ENCODE measurements at regions of chr14 and their contacts with region 1.

Region 1: DNA sequence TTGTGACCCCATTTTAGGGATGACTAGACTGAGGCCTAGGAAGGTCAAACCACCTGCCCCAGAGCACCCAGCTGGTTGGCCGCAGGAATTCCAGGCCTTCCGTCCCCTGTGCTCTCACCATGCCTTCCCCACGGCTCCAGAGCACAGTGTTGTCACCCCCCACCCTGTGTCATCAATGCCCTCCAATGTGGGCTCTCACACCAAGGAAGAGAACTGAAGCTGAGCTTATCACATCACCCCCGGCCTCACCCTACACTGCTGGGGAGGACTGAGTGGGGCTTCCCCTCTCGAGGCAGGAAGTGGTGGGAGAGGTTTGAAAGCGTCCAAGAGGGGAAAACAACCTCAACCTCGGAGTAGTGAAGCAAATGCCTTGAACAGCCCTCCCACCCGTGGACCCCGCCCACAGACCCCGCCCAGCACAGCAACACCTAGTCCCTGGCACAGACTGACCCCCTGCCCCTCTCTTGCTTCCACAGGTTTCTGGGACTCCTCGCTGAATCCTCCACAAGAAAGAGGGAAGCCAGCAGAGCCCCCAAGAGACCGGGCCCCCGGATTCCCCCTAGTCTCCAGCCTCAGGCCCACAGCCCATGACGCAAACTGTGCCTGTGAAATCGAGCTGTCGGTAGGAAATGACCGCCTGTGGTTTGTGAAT is 97.2 kb downstream of the LGMN start:
- DNase-seq: peak; percentile 62 to 93 (median 78)
- ATAC-seq: peak; percentile 85
- H3K4me3 ChIP-seq: peak overlapping the region; percentile 66
- H3K4me3 Mint-ChIP-seq: peak overlapping the region; percentile 99
- H3K27ac ChIP-seq: peak overlapping the region; percentile 90 to 92
- H3K27ac Mint-ChIP-seq: peak overlapping the region; percentile 97
- H3K4me1 ChIP-seq: peaks cover 94% of the 10 kb centered on the region
- H3K4me1 Mint-ChIP-seq: peaks cover 76% of the 10 kb centered on the region
- H3K27me3 ChIP-seq: no peaks in the 10 kb centered on the region
- H3K27me3 Mint-ChIP-seq: no peaks in the 10 kb centered on the region
- CTCF ChIP-seq: no peak

Region 2: DNA sequence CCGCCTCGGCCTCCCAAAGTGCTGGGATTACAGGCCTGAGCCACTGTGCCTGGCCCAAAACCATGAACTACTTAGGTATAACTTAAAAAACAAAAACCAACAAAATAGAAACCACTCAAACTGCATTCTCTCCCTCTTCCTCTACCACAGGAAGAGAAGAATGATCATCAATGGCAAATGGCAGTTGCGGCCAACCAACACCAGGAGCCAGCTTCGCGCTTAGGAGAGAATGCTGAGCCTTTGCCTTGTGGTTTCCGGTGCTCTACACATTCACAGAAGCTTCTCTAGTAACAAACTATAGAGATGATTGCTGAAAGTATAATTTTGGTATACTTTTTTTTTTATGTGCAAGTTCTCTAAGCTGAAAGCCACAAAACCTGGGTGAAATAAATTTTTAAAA is 936.4 kb before region 1 on chr14:
- CTCF ChIA-PET with region 1: no interaction called
- POLR2A ChIA-PET with region 1: no interaction called
- intact Hi-C with region 1: no loop called
- DNase-seq: peak in 9 of 14 experiments; percentile 16 to 63 (median 41)
- ATAC-seq: peak; percentile 96
- H3K4me3 ChIP-seq: no peak overlapping the region
- H3K4me3 Mint-ChIP-seq: peak overlapping the region; percentile 9
- H3K27ac ChIP-seq: no peak overlapping the region
- H3K27ac Mint-ChIP-seq: peak overlapping the region; percentile 67
- H3K4me1 ChIP-seq: no peaks in the 10 kb centered on the region
- H3K4me1 Mint-ChIP-seq: peaks cover 11% of the 10 kb centered on the region
- H3K27me3 ChIP-seq: no peaks in the 10 kb centered on the region
- H3K27me3 Mint-ChIP-seq: no peaks in the 10 kb centered on the region
- CTCF ChIP-seq: peak; percentile 43

Region 3: DNA sequence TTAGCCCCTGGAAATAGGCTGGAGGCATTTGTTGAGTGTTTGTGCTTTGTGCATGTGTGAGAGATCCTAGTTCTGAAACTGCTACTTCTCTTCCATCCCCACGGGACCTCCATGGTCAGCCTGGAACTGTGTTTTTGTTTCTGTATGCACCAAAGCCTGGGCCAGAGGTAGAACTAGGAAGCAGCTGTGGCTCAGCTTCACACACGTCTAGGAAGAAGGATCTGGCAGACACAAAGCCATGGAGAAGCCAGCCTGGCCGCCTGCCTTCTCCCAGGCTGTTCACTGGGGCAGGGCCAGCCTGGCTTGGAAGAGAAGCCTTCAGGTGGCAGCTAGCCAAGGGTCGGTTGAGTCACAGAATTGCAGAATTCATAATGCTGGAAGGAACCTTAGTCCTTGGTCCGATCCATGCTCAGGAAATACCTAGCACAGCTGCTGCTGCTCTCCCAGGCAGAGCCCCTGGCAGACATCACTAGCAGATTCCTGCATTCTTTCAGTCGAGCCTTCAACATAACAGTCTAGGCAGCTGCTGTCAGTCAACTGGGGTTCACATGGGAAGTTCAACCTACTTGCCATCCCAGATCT is 110.7 kb before region 1 on chr14:
- CTCF ChIA-PET with region 1: no interaction called
- POLR2A ChIA-PET with region 1: interaction called, 6 read pairs
- intact Hi-C with region 1: loop called in 1 of 2 experiments (anchors 10 kb)
- DNase-seq: no peak
- ATAC-seq: no peak
- H3K4me3 ChIP-seq: no peak overlapping the region
- H3K4me3 Mint-ChIP-seq: peak overlapping the region; percentile 35
- H3K27ac ChIP-seq: no peak overlapping the region
- H3K27ac Mint-ChIP-seq: peak overlapping the region; percentile 50
- H3K4me1 ChIP-seq: peaks cover 34% of the 10 kb centered on the region
- H3K4me1 Mint-ChIP-seq: peaks cover 59% of the 10 kb centered on the region
- H3K27me3 ChIP-seq: no peaks in the 10 kb centered on the region
- H3K27me3 Mint-ChIP-seq: no peaks in the 10 kb centered on the region
- CTCF ChIP-seq: no peak

Region 4: DNA sequence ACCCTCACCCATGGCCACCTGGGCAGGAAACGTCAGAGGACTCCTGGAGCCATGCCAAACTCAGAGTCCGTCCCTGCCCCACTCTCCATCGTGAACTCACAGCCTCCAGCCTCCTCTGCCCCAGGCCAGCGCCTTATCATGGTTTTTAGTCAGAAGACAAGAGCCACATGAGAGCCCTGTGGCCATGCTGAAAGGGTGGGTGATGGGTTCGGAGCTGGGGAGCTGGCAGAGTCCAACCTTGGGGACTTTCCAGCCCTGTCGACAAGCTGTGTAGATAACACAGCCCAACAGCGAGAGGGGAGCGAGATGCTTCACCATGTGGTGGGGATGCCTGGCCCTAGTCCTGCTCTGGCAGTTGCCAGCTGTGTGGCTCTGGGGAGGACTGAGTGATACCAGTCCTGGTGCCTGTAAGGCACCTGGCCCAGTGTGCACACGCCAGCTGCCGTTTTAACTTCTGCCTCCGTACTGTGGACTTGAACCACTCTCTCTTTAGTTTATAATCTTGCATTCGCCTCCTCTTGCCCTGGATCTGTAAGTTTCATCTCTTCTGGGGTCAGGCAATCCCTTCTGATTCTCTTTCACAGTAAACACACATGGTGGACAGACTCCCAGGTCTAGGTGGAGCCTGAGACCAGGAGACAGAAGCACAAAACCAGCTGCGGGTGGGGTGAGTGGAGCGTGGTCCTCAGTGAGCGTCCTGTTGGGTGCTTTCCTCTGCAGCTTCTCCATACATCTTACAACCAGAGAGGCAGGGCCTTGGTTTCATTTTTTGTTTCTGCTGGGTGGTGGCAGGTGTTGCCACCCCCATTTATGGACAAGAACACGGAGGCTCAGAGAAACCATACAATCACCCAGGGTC is 82.4 kb before region 1 on chr14:
- CTCF ChIA-PET with region 1: no interaction called
- POLR2A ChIA-PET with region 1: no interaction called
- intact Hi-C with region 1: no loop called
- DNase-seq: peak in 3 of 14 experiments; percentile 61 to 76 (median 61)
- ATAC-seq: peak; percentile 68
- H3K4me3 ChIP-seq: no peak overlapping the region
- H3K4me3 Mint-ChIP-seq: peak overlapping the region; percentile 63
- H3K27ac ChIP-seq: peak overlapping the region; percentile 39 to 48
- H3K27ac Mint-ChIP-seq: peak overlapping the region; percentile 80
- H3K4me1 ChIP-seq: peaks cover 18% of the 10 kb centered on the region
- H3K4me1 Mint-ChIP-seq: peaks cover 33% of the 10 kb centered on the region
- H3K27me3 ChIP-seq: no peaks in the 10 kb centered on the region
- H3K27me3 Mint-ChIP-seq: no peaks in the 10 kb centered on the region
- CTCF ChIP-seq: no peak

Region 5: DNA sequence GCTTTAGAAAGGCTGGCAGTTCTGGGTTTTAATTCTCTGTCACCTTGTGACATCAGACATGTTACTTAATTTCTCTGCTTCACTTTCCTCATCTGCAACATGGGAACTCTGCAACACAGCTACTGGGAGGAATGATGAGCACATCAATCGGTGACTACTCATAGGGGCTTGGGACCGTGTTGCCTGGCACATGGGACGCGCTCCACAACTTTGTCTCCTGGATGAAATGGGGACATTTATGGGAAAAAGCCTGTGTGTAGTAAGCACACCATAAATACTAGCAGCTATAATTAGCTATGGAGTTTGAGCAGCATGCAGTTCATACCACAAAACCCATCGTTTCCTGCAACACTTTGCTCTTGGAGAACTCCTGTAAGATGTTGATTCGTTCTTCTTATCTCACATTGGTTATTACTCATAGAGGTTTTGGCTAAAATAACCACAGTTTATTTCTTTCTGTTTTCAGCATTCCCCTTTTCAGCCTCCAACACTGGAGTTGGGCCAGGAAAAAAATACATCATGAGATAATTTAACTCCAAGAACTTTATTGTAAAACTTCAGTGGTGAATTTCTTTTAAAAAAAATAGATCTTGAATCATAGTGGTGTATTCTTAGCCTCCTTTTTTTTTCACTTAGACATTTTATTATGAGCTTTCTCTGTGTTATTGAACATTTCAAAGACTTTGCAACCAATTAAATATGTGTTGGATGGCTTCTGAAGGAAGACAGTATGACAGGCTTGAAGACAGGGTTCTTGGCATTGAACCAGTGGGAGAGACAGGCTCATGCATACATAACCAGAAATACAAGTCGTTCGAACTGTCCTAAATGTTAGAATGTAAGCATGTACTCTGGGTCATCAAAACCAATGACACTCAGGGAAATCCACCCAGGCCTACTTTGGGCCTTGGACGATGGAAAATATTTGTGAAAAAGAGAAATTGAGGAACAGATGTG is 65.0 kb before region 1 on chr14:
- CTCF ChIA-PET with region 1: no interaction called
- POLR2A ChIA-PET with region 1: interaction called, 17 read pairs
- intact Hi-C with region 1: loop called in 1 of 2 experiments (anchors 2 kb)
- DNase-seq: peak in 5 of 14 experiments; percentile 29 to 89 (median 74)
- ATAC-seq: peak; percentile 84
- H3K4me3 ChIP-seq: peak overlapping the region; percentile 8
- H3K4me3 Mint-ChIP-seq: peak overlapping the region; percentile 73
- H3K27ac ChIP-seq: peak overlapping the region; percentile 58 to 84
- H3K27ac Mint-ChIP-seq: peak overlapping the region; percentile 90
- H3K4me1 ChIP-seq: peaks cover 89% of the 10 kb centered on the region
- H3K4me1 Mint-ChIP-seq: peaks cover 96% of the 10 kb centered on the region
- H3K27me3 ChIP-seq: no peaks in the 10 kb centered on the region
- H3K27me3 Mint-ChIP-seq: no peaks in the 10 kb centered on the region
- CTCF ChIP-seq: no peak

Region 6: DNA sequence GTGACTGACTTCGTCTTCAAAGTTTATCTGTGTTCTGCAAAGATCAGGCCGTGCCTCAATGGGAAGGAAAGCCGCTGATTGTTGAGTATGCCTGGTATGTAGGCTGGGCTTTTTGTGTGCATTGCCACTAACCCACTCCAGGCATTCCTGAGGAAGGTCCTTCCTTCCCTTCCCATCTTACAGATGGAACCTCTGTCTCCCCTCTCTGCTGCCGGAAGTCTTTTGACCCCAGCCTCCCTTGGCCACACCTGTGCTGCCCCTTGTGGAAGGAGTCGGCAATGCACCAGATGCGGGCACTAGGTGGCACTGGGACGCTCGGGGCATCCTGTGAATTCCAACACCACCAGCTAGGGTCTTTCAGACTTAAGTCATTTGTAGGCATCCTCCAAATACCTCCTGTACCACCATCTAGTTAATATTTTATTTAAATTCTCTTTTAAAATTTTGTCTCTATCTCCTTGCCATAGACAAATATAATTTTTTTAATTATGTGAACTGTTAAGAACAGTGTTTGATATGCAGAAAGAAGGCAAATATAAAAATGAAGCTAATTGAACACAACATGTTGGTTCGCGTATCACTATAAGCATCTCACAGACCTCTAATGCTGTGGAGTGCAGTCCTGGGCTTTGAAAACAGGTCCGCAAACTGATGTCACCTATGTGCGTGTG is 38.1 kb before region 1 on chr14:
- CTCF ChIA-PET with region 1: interaction called, 19 read pairs
- POLR2A ChIA-PET with region 1: interaction called, 154 read pairs
- intact Hi-C with region 1: loop called (anchors 1 kb)
- DNase-seq: peak; percentile 55 to 83 (median 69)
- ATAC-seq: peak; percentile 35
- H3K4me3 ChIP-seq: no peak overlapping the region
- H3K4me3 Mint-ChIP-seq: peak overlapping the region; percentile 4
- H3K27ac ChIP-seq: no peak overlapping the region
- H3K27ac Mint-ChIP-seq: peak overlapping the region; percentile 67
- H3K4me1 ChIP-seq: peaks cover 56% of the 10 kb centered on the region
- H3K4me1 Mint-ChIP-seq: peaks cover 76% of the 10 kb centered on the region
- H3K27me3 ChIP-seq: no peaks in the 10 kb centered on the region
- H3K27me3 Mint-ChIP-seq: no peaks in the 10 kb centered on the region
- CTCF ChIP-seq: peak; percentile 96

Region 7: GRCh38 chr14:92637228-92637627 is 14.0 kb before region 1 on chr14:
- CTCF ChIA-PET with region 1: no interaction called
- POLR2A ChIA-PET with region 1: interaction called, 15 read pairs
- intact Hi-C with region 1: no loop called
- DNase-seq: no peak
- ATAC-seq: no peak
- H3K4me3 ChIP-seq: no peak overlapping the region
- H3K4me3 Mint-ChIP-seq: no peak overlapping the region
- H3K27ac ChIP-seq: no peak overlapping the region
- H3K27ac Mint-ChIP-seq: no peak overlapping the region
- H3K4me1 ChIP-seq: peaks cover 8% of the 10 kb centered on the region
- H3K4me1 Mint-ChIP-seq: peaks cover 18% of the 10 kb centered on the region
- H3K27me3 ChIP-seq: no peaks in the 10 kb centered on the region
- H3K27me3 Mint-ChIP-seq: no peaks in the 10 kb centered on the region
- CTCF ChIP-seq: no peak

Region 8: GRCh38 chr14:92670160-92670559 is 18.9 kb after region 1 on chr14:
- CTCF ChIA-PET with region 1: interaction called, 3 read pairs
- POLR2A ChIA-PET with region 1: interaction called, 29 read pairs
- intact Hi-C with region 1: no loop called
- DNase-seq: no peak
- ATAC-seq: peak; percentile 33
- H3K4me3 ChIP-seq: no peak overlapping the region
- H3K4me3 Mint-ChIP-seq: no peak overlapping the region
- H3K27ac ChIP-seq: peak overlapping the region; percentile 14
- H3K27ac Mint-ChIP-seq: peak overlapping the region; percentile 89
- H3K4me1 ChIP-seq: peaks cover 60% of the 10 kb centered on the region
- H3K4me1 Mint-ChIP-seq: peaks cover 76% of the 10 kb centered on the region
- H3K27me3 ChIP-seq: no peaks in the 10 kb centered on the region
- H3K27me3 Mint-ChIP-seq: no peaks in the 10 kb centered on the region
- CTCF ChIP-seq: no peak

Region 9: GRCh38 chr14:92686900-92687444 is 35.7 kb after region 1 on chr14:
- CTCF ChIA-PET with region 1: no interaction called
- POLR2A ChIA-PET with region 1: interaction called, 9 read pairs
- intact Hi-C with region 1: loop called in 1 of 2 experiments (anchors 5 kb)
- DNase-seq: peak; percentile 24 to 77 (median 62)
- ATAC-seq: peak; percentile 85
- H3K4me3 ChIP-seq: no peak overlapping the region
- H3K4me3 Mint-ChIP-seq: no peak overlapping the region
- H3K27ac ChIP-seq: no peak overlapping the region
- H3K27ac Mint-ChIP-seq: no peak overlapping the region
- H3K4me1 ChIP-seq: peaks cover 14% of the 10 kb centered on the region
- H3K4me1 Mint-ChIP-seq: peaks cover 6% of the 10 kb centered on the region
- H3K27me3 ChIP-seq: no peaks in the 10 kb centered on the region
- H3K27me3 Mint-ChIP-seq: no peaks in the 10 kb centered on the region
- CTCF ChIP-seq: peak; percentile 83